ENCODE measurements at regions of chr9 and their contacts with region 1.

Region 1: GRCh38 chr9:114505187-114506081 is at the start of gene WHRN:
- DNase-seq: peak; percentile 93
- ATAC-seq: peak; percentile 87
- H3K4me3 Mint-ChIP-seq: peak within 1 kb of the TSS; percentile 75
- H3K27ac Mint-ChIP-seq: no peak within 1 kb of the TSS
- H3K4me1 Mint-ChIP-seq: peaks cover 21% of the 10 kb centered on the region
- H3K27me3 Mint-ChIP-seq: peaks cover 19% of the 10 kb centered on the region
- total RNA-seq, gene WHRN: 1.9 to 2.0 TPM

Region 2: GRCh38 chr9:114339130-114339908 is 166.1 kb before region 1 on chr9:
- CTCF ChIA-PET with region 1: interaction called, 3 read pairs
- POLR2A ChIA-PET with region 1: interaction called, 7 read pairs
- intact Hi-C with region 1: loop called (anchors 5 to 10 kb)
- DNase-seq: peak; percentile 74
- ATAC-seq: peak; percentile 71
- H3K4me3 Mint-ChIP-seq: no peak overlapping the region
- H3K27ac Mint-ChIP-seq: peak overlapping the region; percentile 51
- H3K4me1 Mint-ChIP-seq: peaks cover 3% of the 10 kb centered on the region
- H3K27me3 Mint-ChIP-seq: no peaks in the 10 kb centered on the region

Region 3: GRCh38 chr9:114397848-114398605 is 107.4 kb before region 1 on chr9:
- CTCF ChIA-PET with region 1: no interaction called
- POLR2A ChIA-PET with region 1: no interaction called
- intact Hi-C with region 1: loop called (anchors 1 kb)
- DNase-seq: peak; percentile 98
- ATAC-seq: peak; percentile 87
- H3K4me3 Mint-ChIP-seq: peak overlapping the region; percentile 93
- H3K27ac Mint-ChIP-seq: peak overlapping the region; percentile 89
- H3K4me1 Mint-ChIP-seq: peaks cover 46% of the 10 kb centered on the region
- H3K27me3 Mint-ChIP-seq: no peaks in the 10 kb centered on the region

Region 4: DNA sequence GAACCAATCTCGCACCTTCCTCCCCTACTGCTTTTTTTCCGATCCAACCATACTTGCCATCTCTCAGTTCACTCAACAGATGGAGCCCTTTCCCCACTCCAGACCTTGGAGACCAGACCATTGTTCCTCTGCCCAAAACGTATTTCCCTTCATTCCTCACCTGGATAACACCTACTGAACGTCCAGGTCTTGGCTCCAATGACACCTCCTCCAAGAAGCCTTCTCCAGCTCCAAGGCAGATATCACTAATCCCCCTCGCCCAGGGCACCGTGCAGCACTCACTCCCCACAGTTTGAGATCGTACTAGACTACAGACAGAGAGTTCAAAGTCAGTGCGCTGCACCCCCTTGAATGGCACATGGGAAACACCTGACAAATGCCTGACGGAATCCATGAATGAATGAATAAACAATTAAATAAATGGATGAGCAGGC is 70.5 kb before region 1 on chr9:
- CTCF ChIA-PET with region 1: interaction called, 5 read pairs
- POLR2A ChIA-PET with region 1: no interaction called
- intact Hi-C with region 1: loop called in 1 of 2 experiments (anchors 2 kb)
- DNase-seq: peak; percentile 32
- ATAC-seq: no peak
- H3K4me3 Mint-ChIP-seq: no peak overlapping the region
- H3K27ac Mint-ChIP-seq: no peak overlapping the region
- H3K4me1 Mint-ChIP-seq: peaks cover 2% of the 10 kb centered on the region
- H3K27me3 Mint-ChIP-seq: no peaks in the 10 kb centered on the region

Region 5: DNA sequence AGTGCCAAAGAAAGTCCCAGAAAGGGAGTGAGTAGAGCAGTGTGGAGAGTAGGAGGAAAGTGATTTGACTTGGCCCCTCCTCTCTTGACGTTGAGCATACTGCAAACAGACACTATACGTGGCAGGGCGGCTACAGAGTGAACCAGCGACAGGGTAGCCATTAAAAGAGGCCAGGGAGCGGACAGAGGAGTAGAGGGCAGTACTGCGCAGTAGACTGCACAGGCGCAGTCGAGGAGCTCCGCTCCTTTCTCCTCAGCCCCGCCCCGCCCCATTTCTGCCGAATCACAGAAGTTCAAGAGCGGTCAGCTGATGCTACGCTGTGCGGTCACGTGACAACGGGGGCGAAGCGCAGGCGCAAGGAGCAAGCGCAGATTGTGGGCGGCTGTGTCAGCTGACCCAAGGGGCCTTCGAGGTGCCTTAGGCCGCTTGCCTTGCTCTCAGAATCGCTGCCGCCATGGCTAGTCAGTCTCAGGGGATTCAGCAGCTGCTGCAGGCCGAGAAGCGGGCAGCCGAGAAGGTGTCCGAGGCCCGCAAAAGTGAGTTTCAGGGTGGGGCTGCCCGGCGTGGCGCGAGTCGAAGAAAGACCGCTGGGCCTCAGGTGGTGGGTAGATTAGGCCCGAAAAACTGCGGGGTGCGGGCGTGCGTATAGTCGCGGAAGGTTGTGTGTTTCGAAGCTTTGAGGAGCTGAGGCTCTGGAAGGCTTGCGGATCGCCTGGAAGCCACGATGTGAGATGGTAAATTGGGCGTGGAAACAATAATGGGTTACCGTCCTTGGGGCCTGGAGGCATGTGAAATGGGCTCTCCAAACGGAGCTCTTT is 82.2 kb after region 1 on chr9 and contains the start of gene ATP6V1G1:
- CTCF ChIA-PET with region 1: interaction called, 4 read pairs
- POLR2A ChIA-PET with region 1: interaction called, 5 read pairs
- intact Hi-C with region 1: loop called (anchors 1 kb)
- DNase-seq: peak; percentile 100
- ATAC-seq: peak; percentile 96
- H3K4me3 Mint-ChIP-seq: peak within 1 kb of the TSS; percentile 99
- H3K27ac Mint-ChIP-seq: peak within 1 kb of the TSS; percentile 100
- H3K4me1 Mint-ChIP-seq: peaks cover 44% of the 10 kb centered on the region
- H3K27me3 Mint-ChIP-seq: no peaks in the 10 kb centered on the region
- total RNA-seq, gene ATP6V1G1: 33.8 to 37.7 TPM

Region 6: GRCh38 chr9:114641967-114642366 is 136.5 kb after region 1 on chr9:
- CTCF ChIA-PET with region 1: no interaction called
- POLR2A ChIA-PET with region 1: no interaction called
- intact Hi-C with region 1: no loop called
- DNase-seq: no peak
- ATAC-seq: no peak
- H3K4me3 Mint-ChIP-seq: no peak overlapping the region
- H3K27ac Mint-ChIP-seq: no peak overlapping the region
- H3K4me1 Mint-ChIP-seq: peaks cover 5% of the 10 kb centered on the region
- H3K27me3 Mint-ChIP-seq: no peaks in the 10 kb centered on the region

Region 7: DNA sequence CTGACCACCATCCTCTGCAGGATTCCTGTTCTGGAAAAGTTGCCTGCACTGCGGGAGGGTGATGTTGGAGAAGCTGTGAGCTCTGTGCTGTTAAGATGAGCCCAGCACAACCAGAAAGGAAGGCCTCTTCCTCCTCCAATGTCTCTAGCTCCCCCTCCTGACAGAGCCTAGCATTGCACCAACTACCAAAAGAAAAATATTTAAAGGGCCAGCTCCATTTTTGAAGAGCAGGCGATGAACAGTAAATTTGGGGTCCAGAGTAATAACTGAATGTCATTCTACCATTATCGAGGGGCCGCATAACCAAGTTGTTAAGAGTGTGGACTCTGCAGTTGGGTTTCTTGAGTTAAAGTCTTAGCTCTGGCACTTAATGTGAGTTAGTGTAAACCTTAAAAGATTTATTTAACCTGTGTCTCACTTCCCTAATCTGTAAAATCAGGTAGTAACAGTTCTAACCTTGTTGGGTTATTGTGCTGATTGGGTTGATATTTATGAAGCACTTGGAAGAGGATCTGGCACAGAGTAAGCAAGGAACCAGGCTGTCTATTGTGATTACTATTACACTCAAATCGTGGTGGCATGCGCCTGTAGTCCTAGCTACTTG is 148.2 kb after region 1 on chr9:
- CTCF ChIA-PET with region 1: interaction called, 20 read pairs
- POLR2A ChIA-PET with region 1: no interaction called
- intact Hi-C with region 1: loop called (anchors 1 to 5 kb)
- DNase-seq: peak; percentile 89
- ATAC-seq: peak; percentile 83
- H3K4me3 Mint-ChIP-seq: no peak overlapping the region
- H3K27ac Mint-ChIP-seq: peak overlapping the region; percentile 14
- H3K4me1 Mint-ChIP-seq: peaks cover 26% of the 10 kb centered on the region
- H3K27me3 Mint-ChIP-seq: no peaks in the 10 kb centered on the region